CD4-positive, alpha-beta memory T cell (primary cell): ENCODE measurements at regions of chr6 and their contacts with region 1.

Region 1: DNA sequence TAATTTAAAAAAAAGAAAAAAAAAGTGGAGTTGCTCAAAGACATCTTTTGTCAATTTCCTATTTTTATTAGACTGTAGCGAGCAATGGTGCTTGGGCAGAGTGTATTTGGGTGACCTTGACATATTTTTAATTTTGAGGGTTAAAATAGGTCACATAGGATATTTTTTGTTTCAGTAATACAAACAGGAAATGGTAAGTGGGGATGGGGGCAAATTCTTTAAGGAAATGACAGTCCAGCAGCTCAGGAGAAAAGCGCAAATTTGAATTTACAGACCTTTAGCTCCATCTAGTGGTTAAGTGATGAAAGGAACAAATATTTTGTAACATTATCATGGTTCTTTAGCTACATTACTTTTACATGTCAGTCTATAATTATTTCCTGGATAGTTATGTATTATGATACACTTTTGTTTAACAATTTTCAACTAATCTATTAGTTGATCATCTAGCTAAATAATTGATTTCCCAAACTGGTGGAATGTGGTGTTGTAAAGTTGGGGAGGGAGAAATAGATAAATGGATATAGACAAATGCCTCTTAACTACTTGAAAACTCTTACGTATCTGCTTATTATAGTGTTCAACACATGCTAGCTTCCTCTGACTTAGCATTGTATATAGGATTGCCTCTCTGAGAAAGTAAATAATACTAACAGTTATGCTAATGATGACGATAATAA is 10.0 kb downstream of the CITED2 start:
- DNase-seq: peak in 4 of 5 donors; percentile 66 to 74 (median 68)
- H3K4me3 ChIP-seq: no peak overlapping the region
- H3K4me3 Mint-ChIP-seq: peak overlapping the region in 7 of 8 donors; percentile 27 to 64 (median 36)
- H3K27ac ChIP-seq: no peak overlapping the region
- H3K27ac Mint-ChIP-seq: peak overlapping the region in 6 of 7 donors; percentile 2 to 82 (median 62)
- H3K4me1 ChIP-seq: peaks cover 20% of the 10 kb centered on the region
- H3K4me1 Mint-ChIP-seq: peaks cover 28 to 45% (median 33%) of the 10 kb centered on the region in 4 donors
- H3K27me3 ChIP-seq: no peaks in the 10 kb centered on the region
- H3K27me3 Mint-ChIP-seq: no peaks in the 10 kb centered on the region

Region 2: GRCh38 chr6:138817822-138818308 is 546.6 kb before region 1 on chr6:
- CTCF ChIA-PET with region 1: interaction called, 28 read pairs
- POLR2A ChIA-PET with region 1: interaction called, 3 read pairs
- intact Hi-C with region 1: loop called (anchors 1 kb)
- DNase-seq: no peak
- H3K4me3 ChIP-seq: no peak overlapping the region
- H3K4me3 Mint-ChIP-seq: no peak overlapping the region
- H3K27ac ChIP-seq: no peak overlapping the region
- H3K27ac Mint-ChIP-seq: peak overlapping the region in 1 of 7 donors; percentile 55
- H3K4me1 ChIP-seq: no peaks in the 10 kb centered on the region
- H3K4me1 Mint-ChIP-seq: peaks cover 3 to 10% (median 7%) of the 10 kb centered on the region in 4 donors
- H3K27me3 ChIP-seq: no peaks in the 10 kb centered on the region
- H3K27me3 Mint-ChIP-seq: peaks cover 0 to 2% of the 10 kb centered on the region in 2 donors

Region 3: DNA sequence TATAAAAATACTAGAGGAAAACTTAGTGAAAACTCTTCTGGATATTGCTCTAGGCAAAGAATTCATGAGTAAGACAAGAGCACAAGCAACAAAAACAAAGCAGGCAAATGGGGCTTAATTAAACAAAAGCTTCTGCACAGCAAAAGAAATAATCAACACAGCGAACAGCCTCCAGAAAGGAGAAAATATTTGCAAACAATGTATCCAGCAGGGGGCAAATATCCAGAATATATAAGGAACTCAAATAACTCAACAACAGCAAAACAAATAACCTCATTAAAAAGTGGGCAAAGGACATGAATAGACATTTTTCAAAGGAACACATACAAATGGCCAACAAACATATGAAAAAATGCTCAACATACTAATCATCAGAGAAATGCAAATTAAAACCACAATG is 246.7 kb before region 1 on chr6:
- CTCF ChIA-PET with region 1: interaction called, 19 read pairs
- POLR2A ChIA-PET with region 1: interaction called, 6 read pairs
- intact Hi-C with region 1: no loop called
- DNase-seq: no peak
- H3K4me3 ChIP-seq: no peak overlapping the region
- H3K4me3 Mint-ChIP-seq: peak overlapping the region in 2 of 8 donors; percentile 16 to 69
- H3K27ac ChIP-seq: no peak overlapping the region
- H3K27ac Mint-ChIP-seq: peak overlapping the region in 2 of 7 donors; percentile 62 to 64
- H3K4me1 ChIP-seq: peaks cover 49% of the 10 kb centered on the region
- H3K4me1 Mint-ChIP-seq: peaks cover 38 to 57% (median 46%) of the 10 kb centered on the region in 4 donors
- H3K27me3 ChIP-seq: no peaks in the 10 kb centered on the region
- H3K27me3 Mint-ChIP-seq: no peaks in the 10 kb centered on the region

Region 4: DNA sequence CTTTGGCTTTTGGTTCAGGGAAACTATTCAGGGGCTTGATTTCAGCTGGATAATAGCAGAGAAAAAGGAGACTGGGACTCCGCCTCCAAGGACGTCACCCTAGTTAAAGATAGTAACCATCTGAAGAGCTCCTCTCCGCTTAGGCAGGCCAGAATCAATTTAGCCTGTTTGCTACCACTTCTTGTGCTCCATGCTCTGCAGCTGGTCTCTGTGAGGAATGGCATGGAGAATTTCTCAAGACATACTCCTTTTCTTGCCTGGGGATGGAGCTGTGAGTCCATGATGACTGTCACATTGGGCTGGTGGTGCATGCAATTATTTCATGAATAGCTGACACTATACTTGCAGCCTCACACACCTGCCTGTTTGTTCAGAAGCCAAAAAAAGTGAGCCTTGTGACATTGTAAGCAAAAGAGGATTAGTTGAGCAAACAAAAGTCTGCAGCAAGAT is 134.0 kb before region 1 on chr6:
- CTCF ChIA-PET with region 1: interaction called, 38 read pairs
- POLR2A ChIA-PET with region 1: interaction called, 7 read pairs
- intact Hi-C with region 1: loop called (anchors 1 kb)
- DNase-seq: peak in 4 of 5 donors; percentile 17 to 31 (median 22)
- H3K4me3 ChIP-seq: no peak overlapping the region
- H3K4me3 Mint-ChIP-seq: no peak overlapping the region
- H3K27ac ChIP-seq: no peak overlapping the region
- H3K27ac Mint-ChIP-seq: peak overlapping the region in 2 of 7 donors; percentile 19 to 65
- H3K4me1 ChIP-seq: no peaks in the 10 kb centered on the region
- H3K4me1 Mint-ChIP-seq: peaks cover 6 to 13% (median 9%) of the 10 kb centered on the region in 4 donors
- H3K27me3 ChIP-seq: no peaks in the 10 kb centered on the region
- H3K27me3 Mint-ChIP-seq: no peaks in the 10 kb centered on the region

Region 5: GRCh38 chr6:139323511-139324300 is 40.7 kb before region 1 on chr6:
- CTCF ChIA-PET with region 1: interaction called, 9 read pairs
- POLR2A ChIA-PET with region 1: interaction called, 6 read pairs
- intact Hi-C with region 1: loop called (anchors 5 kb)
- DNase-seq: peak; percentile 86 to 91 (median 89)
- H3K4me3 ChIP-seq: peak overlapping the region; percentile 33 to 61
- H3K4me3 Mint-ChIP-seq: peak overlapping the region; percentile 78 to 92 (median 88)
- H3K27ac ChIP-seq: peak overlapping the region; percentile 87
- H3K27ac Mint-ChIP-seq: peak overlapping the region; percentile 98 to 100 (median 98)
- H3K4me1 ChIP-seq: peaks cover 35% of the 10 kb centered on the region
- H3K4me1 Mint-ChIP-seq: peaks cover 21 to 43% (median 34%) of the 10 kb centered on the region in 4 donors
- H3K27me3 ChIP-seq: no peaks in the 10 kb centered on the region
- H3K27me3 Mint-ChIP-seq: no peaks in the 10 kb centered on the region